ENCODE measurements at regions of chr11 and their contacts with region 1.

Region 1: GRCh38 chr11:16310943-16311342 is 45.4 kb downstream of the SOX6 start:
- DNase-seq: no peak
- ATAC-seq: no peak
- H3K4me3 Mint-ChIP-seq: no peak overlapping the region
- H3K27ac Mint-ChIP-seq: no peak overlapping the region
- H3K4me1 Mint-ChIP-seq: no peaks in the 10 kb centered on the region
- H3K27me3 Mint-ChIP-seq: no peaks in the 10 kb centered on the region; the same call in 1 of the 2 replicates
- CTCF ChIP-seq: no peak

Region 2: DNA sequence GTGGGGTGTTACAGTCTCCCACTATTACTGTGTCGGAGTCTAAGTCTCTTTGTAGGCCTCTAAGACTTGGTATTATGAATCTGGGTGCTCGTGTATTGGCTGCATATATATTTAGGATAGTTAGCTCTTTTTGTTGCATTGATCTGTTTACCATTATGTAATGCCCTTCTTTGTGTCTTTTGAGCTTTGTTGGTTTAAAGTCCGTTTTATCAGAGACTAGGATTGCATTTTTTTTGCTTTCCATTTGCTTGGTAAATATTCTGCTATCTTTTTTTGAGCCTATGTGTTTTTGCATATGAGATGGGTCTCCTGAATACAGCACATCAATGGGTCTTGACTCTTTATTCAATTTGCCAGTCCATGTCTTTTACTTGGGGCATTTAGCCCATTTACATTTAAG is 1569.7 kb before region 1 on chr11:
- CTCF ChIA-PET with region 1: no interaction called
- POLR2A ChIA-PET with region 1: interaction called, 14 read pairs
- DNase-seq: no peak
- ATAC-seq: no peak
- H3K4me3 Mint-ChIP-seq: no peak overlapping the region
- H3K27ac Mint-ChIP-seq: no peak overlapping the region
- H3K4me1 Mint-ChIP-seq: peaks cover 11% of the 10 kb centered on the region
- H3K27me3 Mint-ChIP-seq: no peaks in the 10 kb centered on the region
- CTCF ChIP-seq: no peak

Region 3: DNA sequence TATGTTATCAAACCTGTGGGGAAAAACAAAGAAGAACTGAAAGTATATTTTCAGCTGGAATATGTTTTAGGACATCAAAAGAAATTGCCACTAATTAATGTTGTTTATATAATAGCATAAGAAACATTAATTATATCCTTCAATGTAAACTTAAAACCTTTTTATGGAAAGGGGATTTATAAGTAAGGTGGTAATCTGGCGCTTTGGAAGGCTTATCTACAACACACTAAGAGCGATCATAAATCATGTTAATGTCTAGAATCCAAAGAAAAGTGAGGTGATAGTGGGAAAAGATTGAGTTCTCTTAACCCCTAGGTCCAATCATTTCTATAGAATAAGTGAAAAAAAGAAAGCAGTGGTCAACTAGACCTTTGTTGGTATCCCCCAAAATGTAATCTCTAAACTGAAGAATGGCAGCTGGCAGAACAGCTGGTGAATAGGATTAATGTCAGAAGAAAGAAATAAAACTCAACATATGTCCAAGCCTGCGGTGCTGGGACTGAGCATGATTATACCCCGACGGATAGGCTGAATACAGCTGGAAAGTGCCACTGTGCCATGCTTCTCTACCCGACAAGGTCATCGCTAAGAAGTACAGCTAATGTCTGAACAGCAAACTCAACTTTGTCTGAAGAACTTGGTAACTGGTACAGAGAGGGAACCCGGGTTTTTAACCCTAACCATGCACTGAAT is 18.6 kb before region 1 on chr11:
- CTCF ChIA-PET with region 1: no interaction called
- POLR2A ChIA-PET with region 1: no interaction called
- DNase-seq: no peak
- ATAC-seq: no peak
- H3K4me3 Mint-ChIP-seq: no peak overlapping the region
- H3K27ac Mint-ChIP-seq: no peak overlapping the region
- H3K4me1 Mint-ChIP-seq: peaks cover 15% of the 10 kb centered on the region
- H3K27me3 Mint-ChIP-seq: no peaks in the 10 kb centered on the region
- CTCF ChIP-seq: no peak

Measured in WTC11 (cell line).